B cell (primary cell): ENCODE measurements at regions of chr6 and their contacts with region 1.

Region 1: GRCh38 chr6:33288921-33289748 is at the starts of genes PFDN6 and WDR46:
- DNase-seq: peak; percentile 93
- ATAC-seq: peak; percentile 96
- H3K4me3 ChIP-seq: peak within 1 kb of the TSS; percentile 78 to 99 (median 86)
- H3K4me3 Mint-ChIP-seq: peak within 1 kb of the TSS; percentile 93
- H3K27ac ChIP-seq: peak within 1 kb of the TSS; percentile 42 to 68
- H3K27ac Mint-ChIP-seq: peak within 1 kb of the TSS; percentile 86
- H3K4me1 ChIP-seq: peaks cover 19 to 25% of the 10 kb centered on the region in 2 donors
- H3K4me1 Mint-ChIP-seq: peaks cover 38% of the 10 kb centered on the region
- H3K27me3 ChIP-seq: no peaks in the 10 kb centered on the region
- H3K27me3 Mint-ChIP-seq: no peaks in the 10 kb centered on the region
- CTCF ChIP-seq: no peak
- total RNA-seq, gene PFDN6: 44.7 and 51.1 TPM in 2 replicates
- total RNA-seq, gene WDR46: 66.4 and 77.2 TPM in 2 replicates

Region 2: DNA sequence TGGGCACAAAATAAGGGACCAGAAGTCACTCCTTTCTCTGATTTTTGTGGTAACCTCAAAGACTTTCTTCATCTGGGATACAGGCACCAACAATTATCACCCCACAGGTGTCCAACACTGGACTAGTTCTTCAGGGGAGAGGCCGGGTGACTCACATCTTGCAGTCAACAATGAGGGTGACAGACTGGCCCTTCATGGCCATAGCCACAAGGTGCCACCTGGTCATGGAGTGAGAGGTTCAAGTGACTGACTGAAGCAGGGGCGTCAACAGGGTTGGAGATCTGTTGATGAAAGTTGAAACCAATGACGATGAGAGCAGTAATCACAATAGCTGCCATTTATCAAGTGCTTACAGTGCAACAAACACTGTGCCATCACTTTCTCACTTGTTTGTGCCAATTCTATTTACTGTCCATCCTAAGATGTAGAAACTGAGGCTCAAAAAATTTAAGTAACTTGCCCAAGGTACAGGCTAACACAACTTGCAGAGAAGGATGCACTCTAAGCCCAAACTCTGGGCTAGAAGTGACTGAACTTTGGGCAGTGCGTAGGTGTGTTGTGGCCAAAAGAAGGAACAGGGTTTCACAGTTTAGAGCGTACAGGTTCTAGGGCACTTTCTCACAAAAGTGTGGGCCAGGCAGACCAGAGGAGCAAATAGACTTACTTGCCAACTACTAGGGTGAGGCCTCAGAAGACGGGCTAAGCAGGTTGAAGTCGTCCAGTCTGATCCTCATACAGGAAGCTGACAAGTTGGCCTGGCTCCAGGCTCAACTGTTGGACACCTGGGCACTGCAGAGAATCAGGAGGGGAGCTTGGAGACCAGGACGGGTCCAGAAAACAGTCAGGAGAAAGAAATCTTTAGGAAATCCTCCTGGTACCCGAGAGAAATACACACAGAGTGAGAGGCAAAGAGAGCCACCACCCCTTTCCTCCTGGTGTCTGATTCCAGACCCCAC is 182.9 kb before region 1 on chr6:
- CTCF ChIA-PET with region 1: no interaction called
- POLR2A ChIA-PET with region 1: no interaction called
- intact Hi-C with region 1: no loop called
- DNase-seq: no peak
- ATAC-seq: no peak
- H3K4me3 ChIP-seq: no peak overlapping the region
- H3K4me3 Mint-ChIP-seq: no peak overlapping the region
- H3K27ac ChIP-seq: no peak overlapping the region
- H3K27ac Mint-ChIP-seq: no peak overlapping the region
- H3K4me1 ChIP-seq: peaks cover 0 to 5% of the 10 kb centered on the region in 2 donors
- H3K4me1 Mint-ChIP-seq: peaks cover 6% of the 10 kb centered on the region
- H3K27me3 ChIP-seq: no peaks in the 10 kb centered on the region
- H3K27me3 Mint-ChIP-seq: peaks cover 10% of the 10 kb centered on the region
- CTCF ChIP-seq: no peak

Region 3: DNA sequence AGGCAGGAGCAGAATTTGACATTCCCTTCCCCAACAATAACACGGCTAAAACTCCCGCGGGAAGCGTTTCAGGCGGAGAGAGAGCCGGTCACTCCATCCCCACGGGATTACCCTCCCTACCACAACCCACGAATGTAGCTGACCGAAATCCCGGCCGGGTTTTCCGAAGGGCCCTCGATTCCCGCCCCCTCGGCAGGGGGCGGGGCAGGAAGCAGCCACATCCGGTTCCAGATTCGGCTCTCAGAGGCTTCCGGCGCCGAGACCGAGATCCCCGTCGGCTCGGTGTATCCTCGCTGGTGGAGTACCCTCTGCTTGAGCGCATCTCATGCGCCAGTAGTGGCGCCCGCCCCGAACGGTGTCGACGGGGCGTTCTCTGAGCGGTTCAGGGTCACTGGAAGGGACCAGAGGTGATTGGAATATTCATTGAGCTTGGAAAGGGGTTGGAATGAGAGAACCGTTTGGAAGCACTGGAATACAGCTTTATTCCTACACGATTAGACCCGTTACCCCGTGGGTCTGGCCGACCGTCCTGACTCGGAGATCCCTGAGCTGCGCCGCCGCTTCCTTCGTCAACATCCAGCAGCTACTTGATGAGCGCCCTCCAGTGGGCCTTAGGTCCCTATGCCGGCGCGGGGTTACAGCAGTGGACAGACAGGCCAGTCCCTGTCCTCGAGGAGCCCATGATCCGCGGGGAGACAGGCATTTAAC is 10.3 kb after region 1 on chr6:
- CTCF ChIA-PET with region 1: interaction called, 12 read pairs
- POLR2A ChIA-PET with region 1: interaction called, 22 read pairs
- intact Hi-C with region 1: loop called (anchors 1 kb)
- DNase-seq: peak; percentile 95
- ATAC-seq: peak; percentile 68
- H3K4me3 ChIP-seq: peak overlapping the region; percentile 71 to 96 (median 79)
- H3K4me3 Mint-ChIP-seq: peak overlapping the region; percentile 99
- H3K27ac ChIP-seq: peak overlapping the region; percentile 86 to 91
- H3K27ac Mint-ChIP-seq: peak overlapping the region; percentile 99
- H3K4me1 ChIP-seq: peaks cover 12 to 24% of the 10 kb centered on the region in 2 donors
- H3K4me1 Mint-ChIP-seq: peaks cover 38% of the 10 kb centered on the region
- H3K27me3 ChIP-seq: no peaks in the 10 kb centered on the region
- H3K27me3 Mint-ChIP-seq: no peaks in the 10 kb centered on the region
- CTCF ChIP-seq: peak; percentile 69

Region 4: DNA sequence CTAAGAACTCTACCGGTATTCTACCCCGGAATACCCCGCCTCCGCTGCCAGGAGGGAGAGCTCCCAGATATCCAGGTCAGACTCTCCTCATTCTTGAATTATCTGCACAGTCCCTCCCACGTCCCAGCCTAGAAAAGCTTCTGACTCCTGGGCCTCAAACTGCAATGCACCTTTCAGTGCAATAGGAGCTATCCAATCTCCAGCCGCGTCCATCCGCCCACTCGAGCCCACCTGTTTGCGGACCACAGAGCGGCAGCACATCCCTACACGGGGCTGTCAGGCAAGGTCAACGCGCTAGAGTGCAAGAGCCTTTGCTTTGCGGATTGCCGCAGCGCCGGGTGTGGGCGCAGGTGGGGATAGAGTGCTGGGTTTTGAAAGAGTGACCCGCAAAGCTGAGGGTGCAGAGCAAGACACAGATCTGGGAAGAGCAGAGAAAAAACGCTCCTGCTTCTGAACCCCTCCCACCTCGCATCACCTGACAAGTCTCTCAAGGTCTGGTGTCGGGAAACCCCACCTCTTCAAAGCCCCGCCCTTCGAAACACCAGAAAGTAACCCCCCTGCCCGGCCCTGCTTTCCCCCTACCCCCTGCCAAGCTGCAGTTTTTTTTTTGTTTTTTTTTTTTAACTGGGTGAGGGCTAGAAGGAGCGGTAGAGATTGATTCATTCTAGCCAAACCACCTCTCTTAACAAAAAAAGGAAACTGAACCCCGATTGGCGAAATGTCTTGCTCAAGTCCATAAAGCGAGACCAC is 23.4 kb after region 1 on chr6:
- CTCF ChIA-PET with region 1: interaction called, 8 read pairs
- POLR2A ChIA-PET with region 1: interaction called, 11 read pairs
- intact Hi-C with region 1: loop called (anchors 1 kb)
- DNase-seq: peak; percentile 91
- ATAC-seq: peak; percentile 19
- H3K4me3 ChIP-seq: peak overlapping the region; percentile 74 to 100 (median 97)
- H3K4me3 Mint-ChIP-seq: peak overlapping the region; percentile 100
- H3K27ac ChIP-seq: peak overlapping the region; percentile 97 to 100
- H3K27ac Mint-ChIP-seq: peak overlapping the region; percentile 98
- H3K4me1 ChIP-seq: peaks cover 44 to 59% of the 10 kb centered on the region in 2 donors
- H3K4me1 Mint-ChIP-seq: peaks cover 64% of the 10 kb centered on the region
- H3K27me3 ChIP-seq: no peaks in the 10 kb centered on the region
- H3K27me3 Mint-ChIP-seq: no peaks in the 10 kb centered on the region
- CTCF ChIP-seq: no peak

Region 5: DNA sequence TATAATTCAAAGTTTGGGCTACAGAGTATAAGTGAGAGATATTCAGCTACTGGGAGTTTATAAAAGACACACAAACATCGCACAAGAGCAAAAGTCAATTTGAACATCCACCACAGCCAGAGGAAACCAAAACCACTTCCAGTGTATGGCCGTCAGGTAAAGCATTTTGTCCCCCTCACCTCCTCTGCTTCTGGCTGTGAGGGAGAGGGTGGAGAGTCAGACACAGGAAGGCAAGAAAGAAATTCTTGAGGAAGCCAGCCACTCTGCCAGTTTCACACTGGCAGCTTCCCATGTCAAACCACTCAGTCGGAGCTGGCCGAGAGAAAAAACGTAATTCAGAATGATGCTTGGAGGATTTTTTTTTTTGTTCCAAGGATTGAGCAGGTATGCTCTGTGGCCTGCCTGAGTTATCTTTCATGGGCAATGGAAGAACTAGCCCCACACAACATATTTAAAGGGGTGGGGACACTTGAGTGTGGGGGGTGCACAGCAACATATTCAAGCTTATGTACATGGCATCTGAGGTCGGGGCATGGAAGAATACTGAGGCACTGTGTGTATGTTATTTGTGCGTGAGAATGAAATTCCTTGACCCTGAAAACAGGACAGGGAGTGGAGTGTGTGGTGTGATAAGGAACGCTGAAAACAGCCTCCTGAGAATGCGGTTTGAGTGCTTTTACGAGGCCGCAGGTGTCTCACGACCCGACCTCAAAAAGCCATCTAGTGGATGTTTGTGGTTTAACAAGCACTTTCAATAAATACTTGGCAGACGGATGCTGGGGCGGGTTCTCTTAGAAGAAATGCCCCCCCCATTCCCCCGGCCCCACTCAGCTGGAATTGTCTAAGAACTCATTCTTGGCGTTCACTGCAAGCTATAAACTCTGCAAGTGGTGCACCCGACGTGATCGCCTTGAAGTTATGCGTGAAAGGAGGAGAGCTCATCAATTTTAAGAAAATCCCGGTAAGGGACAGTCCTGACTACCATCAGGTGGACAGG is 55.9 kb after region 1 on chr6:
- CTCF ChIA-PET with region 1: interaction called, 9 read pairs
- POLR2A ChIA-PET with region 1: interaction called, 6 read pairs
- intact Hi-C with region 1: loop called (anchors 1 kb)
- DNase-seq: peak; percentile 91
- ATAC-seq: peak; percentile 31
- H3K4me3 ChIP-seq: peak overlapping the region in 4 of 5 experiments; percentile 13 to 59 (median 42)
- H3K4me3 Mint-ChIP-seq: peak overlapping the region; percentile 81
- H3K27ac ChIP-seq: peak overlapping the region; percentile 92 to 93
- H3K27ac Mint-ChIP-seq: peak overlapping the region; percentile 94
- H3K4me1 ChIP-seq: peaks cover 40 to 50% of the 10 kb centered on the region in 2 donors
- H3K4me1 Mint-ChIP-seq: peaks cover 36% of the 10 kb centered on the region
- H3K27me3 ChIP-seq: no peaks in the 10 kb centered on the region
- H3K27me3 Mint-ChIP-seq: no peaks in the 10 kb centered on the region
- CTCF ChIP-seq: peak; percentile 79